Activated B cell treated with CpG ODN at 0.5 μM for 24 hours (primary cell): ENCODE measurements at regions of chr7 and their contacts with region 1.

Region 1: DNA sequence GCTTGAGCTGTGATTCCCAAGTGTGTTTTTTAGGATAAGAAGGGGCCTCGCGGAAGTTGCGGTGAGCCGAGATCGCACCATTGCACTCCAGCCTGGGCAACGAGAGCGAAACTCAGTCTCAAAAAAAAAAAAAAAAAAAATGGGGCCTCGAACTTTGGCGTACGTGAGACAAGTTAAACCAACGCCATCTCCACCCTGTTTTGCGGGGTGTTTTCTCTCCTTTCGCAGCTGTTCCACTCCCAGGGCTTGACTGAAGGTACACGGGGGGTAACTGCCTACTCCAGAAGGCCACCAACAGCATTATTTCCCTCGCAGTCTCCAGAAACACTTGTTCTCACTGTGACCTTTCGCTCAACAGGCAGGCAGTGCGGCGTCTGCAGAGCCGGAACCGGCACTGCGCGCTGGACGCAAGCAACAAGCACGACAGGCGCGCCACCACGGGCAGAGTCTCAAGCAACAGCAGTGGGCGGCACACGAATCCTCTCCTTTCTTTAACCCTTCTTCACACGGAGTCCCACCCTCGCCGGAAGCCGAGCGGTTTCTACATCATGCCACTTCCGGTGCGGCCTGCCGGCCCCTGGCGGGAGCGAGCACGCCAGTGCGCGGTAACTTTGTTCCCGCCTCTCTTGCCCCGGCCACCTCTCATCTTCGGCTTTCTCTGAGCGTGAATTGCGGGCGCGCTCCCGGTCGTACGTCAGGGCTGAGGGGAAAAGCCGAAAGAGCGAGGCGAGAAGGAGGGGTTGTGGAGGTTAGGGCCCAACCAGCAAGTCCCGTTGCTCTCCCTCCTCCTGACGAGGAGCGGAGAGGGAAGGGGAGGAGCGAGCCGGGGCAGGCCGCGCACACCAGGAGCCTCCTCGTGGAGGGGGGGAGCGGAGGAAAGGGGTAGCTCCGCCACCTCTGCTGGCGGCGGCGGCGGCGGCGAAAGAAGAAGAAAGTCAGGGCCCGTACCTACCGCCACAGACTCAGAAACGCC is 814 bp upstream of the CDK13 start:
- DNase-seq: peak; percentile 97
- ATAC-seq: peak; percentile 72
- H3K4me3 Mint-ChIP-seq: peak overlapping the region; percentile 99
- H3K27ac Mint-ChIP-seq: peak overlapping the region; percentile 100
- H3K4me1 Mint-ChIP-seq: peaks cover 40% of the 10 kb centered on the region
- H3K27me3 Mint-ChIP-seq: no peaks in the 10 kb centered on the region
- CTCF ChIP-seq: no peak

Region 2: GRCh38 chr7:38178004-38178694 is 1771.1 kb before region 1 on chr7 and contains the start of gene STARD3NL:
- CTCF ChIA-PET with region 1: no interaction called
- POLR2A ChIA-PET with region 1: no interaction called
- intact Hi-C with region 1: loop called (anchors 2 kb)
- DNase-seq: peak; percentile 81
- ATAC-seq: peak; percentile 96
- H3K4me3 Mint-ChIP-seq: peak within 1 kb of the TSS; percentile 97
- H3K27ac Mint-ChIP-seq: peak within 1 kb of the TSS; percentile 93
- H3K4me1 Mint-ChIP-seq: peaks cover 36% of the 10 kb centered on the region
- H3K27me3 Mint-ChIP-seq: no peaks in the 10 kb centered on the region
- CTCF ChIP-seq: no peak
- total RNA-seq, gene STARD3NL: 16.2 and 17.4 TPM in 2 replicates

Region 3: GRCh38 chr7:38518541-38518940 is 1430.7 kb before region 1 on chr7:
- CTCF ChIA-PET with region 1: no interaction called
- POLR2A ChIA-PET with region 1: no interaction called
- intact Hi-C with region 1: no loop called
- DNase-seq: no peak
- ATAC-seq: no peak
- H3K4me3 Mint-ChIP-seq: no peak overlapping the region
- H3K27ac Mint-ChIP-seq: no peak overlapping the region
- H3K4me1 Mint-ChIP-seq: no peaks in the 10 kb centered on the region
- H3K27me3 Mint-ChIP-seq: peaks cover 10% of the 10 kb centered on the region
- CTCF ChIP-seq: no peak

Region 4: GRCh38 chr7:39580149-39580874 is 368.9 kb before region 1 on chr7:
- CTCF ChIA-PET with region 1: interaction called, 4 read pairs
- POLR2A ChIA-PET with region 1: interaction called, 3 read pairs
- intact Hi-C with region 1: loop called (anchors 5 kb)
- DNase-seq: peak; percentile 39
- ATAC-seq: peak; percentile 97
- H3K4me3 Mint-ChIP-seq: no peak overlapping the region
- H3K27ac Mint-ChIP-seq: no peak overlapping the region
- H3K4me1 Mint-ChIP-seq: peaks cover 3% of the 10 kb centered on the region
- H3K27me3 Mint-ChIP-seq: no peaks in the 10 kb centered on the region
- CTCF ChIP-seq: no peak

Region 5: DNA sequence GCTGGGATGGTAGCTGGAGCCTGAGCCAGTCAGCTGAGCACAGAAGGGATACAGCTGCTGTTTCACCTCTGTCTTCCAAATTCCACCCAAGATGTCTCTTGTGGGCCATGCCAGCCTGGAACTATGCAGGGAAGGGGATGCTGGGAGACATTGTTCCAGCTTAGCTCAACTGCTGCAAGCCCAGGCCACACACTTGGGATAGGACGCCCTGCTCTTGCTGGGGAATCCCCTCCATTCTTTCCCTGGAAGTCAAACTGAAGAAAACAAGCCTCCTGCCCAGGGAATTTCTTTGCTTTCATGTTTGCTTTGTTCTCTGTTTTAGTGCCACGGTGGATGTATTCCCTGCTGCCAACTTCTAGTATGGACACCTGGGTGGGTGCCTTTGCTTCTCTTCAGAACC is 54.3 kb before region 1 on chr7:
- CTCF ChIA-PET with region 1: interaction called, 11 read pairs
- POLR2A ChIA-PET with region 1: interaction called, 4 read pairs
- intact Hi-C with region 1: loop called (anchors 1 kb)
- DNase-seq: no peak
- ATAC-seq: no peak
- H3K4me3 Mint-ChIP-seq: no peak overlapping the region
- H3K27ac Mint-ChIP-seq: no peak overlapping the region
- H3K4me1 Mint-ChIP-seq: no peaks in the 10 kb centered on the region
- H3K27me3 Mint-ChIP-seq: peaks cover 9% of the 10 kb centered on the region
- CTCF ChIP-seq: no peak

Region 6: GRCh38 chr7:39987476-39988347 is 38.5 kb after region 1 on chr7:
- CTCF ChIA-PET with region 1: interaction called, 5 read pairs
- POLR2A ChIA-PET with region 1: interaction called, 7 read pairs
- intact Hi-C with region 1: loop called (anchors 2 kb)
- DNase-seq: no peak
- ATAC-seq: no peak
- H3K4me3 Mint-ChIP-seq: no peak overlapping the region
- H3K27ac Mint-ChIP-seq: no peak overlapping the region
- H3K4me1 Mint-ChIP-seq: peaks cover 51% of the 10 kb centered on the region
- H3K27me3 Mint-ChIP-seq: no peaks in the 10 kb centered on the region
- CTCF ChIP-seq: no peak

Region 7: DNA sequence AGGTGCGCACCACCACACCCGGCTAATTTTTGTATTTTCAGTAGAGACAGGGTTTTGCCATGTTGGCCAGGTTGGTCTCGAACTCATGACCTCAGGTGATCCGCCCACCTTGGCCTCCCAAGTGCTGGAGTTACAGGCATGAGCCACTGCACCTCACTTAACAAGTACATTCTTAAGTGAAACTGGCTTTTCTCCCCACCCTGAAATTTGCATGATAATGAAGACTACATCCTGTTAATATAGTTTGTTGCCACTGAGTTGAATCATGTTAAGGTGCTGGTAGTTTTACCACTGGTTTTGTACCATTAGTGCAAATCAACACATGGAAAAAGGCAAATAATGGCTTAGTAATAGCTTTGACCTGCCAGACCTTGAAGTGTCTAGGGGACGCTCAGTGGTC is 123.0 kb after region 1 on chr7:
- CTCF ChIA-PET with region 1: no interaction called
- POLR2A ChIA-PET with region 1: interaction called, 10 read pairs
- intact Hi-C with region 1: no loop called
- DNase-seq: no peak
- ATAC-seq: no peak
- H3K4me3 Mint-ChIP-seq: no peak overlapping the region
- H3K27ac Mint-ChIP-seq: peak overlapping the region; percentile 24
- H3K4me1 Mint-ChIP-seq: peaks cover 7% of the 10 kb centered on the region
- H3K27me3 Mint-ChIP-seq: no peaks in the 10 kb centered on the region
- CTCF ChIP-seq: no peak